ENCODE measurements at regions of chr1 and their contacts with region 1.

Region 1: GRCh38 chr1:216944864-216945510 is 221.8 kb upstream of the ESRRG start:
- DNase-seq: no peak
- H3K4me3 ChIP-seq: peak overlapping the region in 1 of 4 experiments; percentile 29; a peak in 1 of 8 replicates
- H3K27ac ChIP-seq: no peak overlapping the region; the same call in 1 of the 2 replicates
- H3K4me1 ChIP-seq: peaks cover 0 to 16% (median 7%) of the 10 kb centered on the region in 4 experiments; a peak in 6 of 7 replicates
- H3K27me3 ChIP-seq: no peaks in the 10 kb centered on the region
- CTCF ChIP-seq: no peak
- EP300 ChIP-seq: no peak
- POLR2A ChIP-seq: no peak
- RAD21 ChIP-seq: no peak

Region 2: GRCh38 chr1:216961516-216961915 is 16.5 kb after region 1 on chr1:
- CTCF ChIA-PET with region 1: interaction called, 10 read pairs
- POLR2A ChIA-PET with region 1: no interaction called
- DNase-seq: no peak
- H3K4me3 ChIP-seq: no peak overlapping the region
- H3K27ac ChIP-seq: no peak overlapping the region
- H3K4me1 ChIP-seq: no peaks in the 10 kb centered on the region
- H3K27me3 ChIP-seq: no peaks in the 10 kb centered on the region
- CTCF ChIP-seq: no peak
- EP300 ChIP-seq: no peak
- POLR2A ChIP-seq: no peak
- RAD21 ChIP-seq: no peak

Region 3: DNA sequence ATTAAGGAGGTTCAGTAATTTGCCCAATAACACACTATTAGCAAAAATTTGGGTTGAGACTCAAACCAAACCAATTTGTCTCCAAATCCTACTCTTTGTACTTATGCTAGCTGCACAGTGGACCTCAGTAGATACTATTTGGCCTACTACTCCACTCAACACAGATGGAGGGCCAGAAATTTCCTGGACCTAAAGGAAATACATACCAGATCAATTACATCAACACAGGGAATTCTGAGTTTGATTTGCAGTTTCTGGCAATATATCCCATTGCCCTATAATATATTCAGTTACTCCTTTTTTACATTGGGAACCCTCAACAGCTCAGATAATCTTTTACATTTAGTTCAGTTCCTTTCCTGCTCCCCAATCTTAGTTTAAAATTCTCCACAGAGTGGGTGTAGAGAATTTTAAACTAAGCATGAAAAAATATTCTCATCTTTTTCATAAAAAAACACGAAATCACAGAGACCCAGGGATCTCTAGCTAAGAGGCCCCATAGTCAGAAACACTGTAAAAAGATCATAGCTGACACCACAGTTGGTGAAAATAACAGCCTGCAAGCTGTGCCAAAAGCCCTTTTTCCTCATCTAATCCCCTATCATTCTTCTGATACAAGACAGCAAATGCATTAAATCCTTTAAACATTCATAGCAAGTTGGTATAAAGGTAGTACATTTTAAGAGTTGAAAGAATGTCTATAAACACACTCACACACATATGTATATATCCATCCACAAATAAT is 95.9 kb after region 1 on chr1:
- CTCF ChIA-PET with region 1: no interaction called
- POLR2A ChIA-PET with region 1: no interaction called
- DNase-seq: no peak
- H3K4me3 ChIP-seq: no peak overlapping the region
- H3K27ac ChIP-seq: no peak overlapping the region
- H3K4me1 ChIP-seq: no peaks in the 10 kb centered on the region
- H3K27me3 ChIP-seq: no peaks in the 10 kb centered on the region
- CTCF ChIP-seq: no peak
- EP300 ChIP-seq: no peak
- POLR2A ChIP-seq: no peak
- RAD21 ChIP-seq: no peak

Region 4: GRCh38 chr1:217106231-217106910 is 161.4 kb after region 1 on chr1:
- CTCF ChIA-PET with region 1: no interaction called
- POLR2A ChIA-PET with region 1: no interaction called
- DNase-seq: no peak
- H3K4me3 ChIP-seq: no peak overlapping the region
- H3K27ac ChIP-seq: no peak overlapping the region
- H3K4me1 ChIP-seq: no peaks in the 10 kb centered on the region
- H3K27me3 ChIP-seq: no peaks in the 10 kb centered on the region
- CTCF ChIP-seq: no peak
- EP300 ChIP-seq: no peak
- POLR2A ChIP-seq: no peak
- RAD21 ChIP-seq: no peak

Region 5: DNA sequence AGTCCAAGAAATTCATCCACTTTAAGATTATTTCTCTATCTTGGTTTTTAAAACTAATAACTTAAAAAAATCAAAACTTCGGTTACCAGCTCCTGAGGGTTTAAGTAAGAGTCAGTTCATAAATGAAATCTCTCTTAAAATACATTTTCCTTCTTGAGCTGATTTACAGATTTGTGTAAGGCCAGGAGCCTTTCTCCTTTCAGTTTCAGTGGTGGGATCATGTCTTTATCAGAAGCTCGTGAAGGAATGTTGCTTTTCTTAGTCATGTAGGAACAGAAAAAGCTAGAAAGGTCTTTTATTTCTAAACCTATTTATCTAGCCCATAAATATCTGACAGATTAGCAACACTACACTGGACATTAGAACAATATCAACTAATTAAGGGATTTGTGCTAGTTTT is 295.7 kb after region 1 on chr1:
- CTCF ChIA-PET with region 1: no interaction called
- POLR2A ChIA-PET with region 1: no interaction called
- DNase-seq: no peak
- H3K4me3 ChIP-seq: no peak overlapping the region
- H3K27ac ChIP-seq: no peak overlapping the region
- H3K4me1 ChIP-seq: no peaks in the 10 kb centered on the region
- H3K27me3 ChIP-seq: no peaks in the 10 kb centered on the region
- CTCF ChIP-seq: no peak
- EP300 ChIP-seq: no peak
- POLR2A ChIP-seq: no peak
- RAD21 ChIP-seq: no peak